Activated CD8-positive, alpha-beta memory T cell treated with anti-CD3 and anti-CD28 coated beads, Interleukin-2, amount 10 ng/mL, durations not matched to agents 7 days and 5 days (primary cell): ENCODE measurements at regions of chr4 and their contacts with region 1.

Region 1: GRCh38 chr4:25986807-25987206 is 72.8 kb downstream of the SMIM20 start:
- DNase-seq: no peak
- ATAC-seq: no peak
- H3K4me3 Mint-ChIP-seq: no peak overlapping the region
- H3K27ac Mint-ChIP-seq: no peak overlapping the region
- H3K4me1 Mint-ChIP-seq: peaks cover 9% of the 10 kb centered on the region
- H3K27me3 Mint-ChIP-seq: peaks cover 2% of the 10 kb centered on the region

Region 2: DNA sequence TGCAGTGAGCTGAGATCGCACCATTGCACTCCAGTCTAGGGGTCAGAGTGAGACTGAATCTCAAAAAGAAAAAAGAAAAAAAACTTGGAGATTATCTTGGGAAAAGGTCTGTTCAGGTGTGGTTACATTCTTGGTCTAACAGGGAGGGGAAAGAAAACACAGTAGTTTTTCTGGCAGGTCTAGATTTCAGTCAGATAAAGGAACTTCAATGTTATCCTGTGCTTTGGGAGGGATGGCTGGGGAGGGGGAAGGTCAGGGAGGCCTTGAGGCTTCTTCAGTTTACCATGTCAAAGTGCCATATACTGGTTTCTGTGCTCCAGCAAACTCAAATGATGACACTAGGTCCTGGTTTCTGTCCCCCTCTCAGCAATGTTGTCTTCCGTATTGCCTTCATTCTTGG is 380.1 kb before region 1 on chr4:
- CTCF ChIA-PET with region 1: no interaction called
- DNase-seq: no peak
- ATAC-seq: no peak
- H3K4me3 Mint-ChIP-seq: no peak overlapping the region
- H3K27ac Mint-ChIP-seq: no peak overlapping the region
- H3K4me1 Mint-ChIP-seq: no peaks in the 10 kb centered on the region
- H3K27me3 Mint-ChIP-seq: no peaks in the 10 kb centered on the region

Region 3: DNA sequence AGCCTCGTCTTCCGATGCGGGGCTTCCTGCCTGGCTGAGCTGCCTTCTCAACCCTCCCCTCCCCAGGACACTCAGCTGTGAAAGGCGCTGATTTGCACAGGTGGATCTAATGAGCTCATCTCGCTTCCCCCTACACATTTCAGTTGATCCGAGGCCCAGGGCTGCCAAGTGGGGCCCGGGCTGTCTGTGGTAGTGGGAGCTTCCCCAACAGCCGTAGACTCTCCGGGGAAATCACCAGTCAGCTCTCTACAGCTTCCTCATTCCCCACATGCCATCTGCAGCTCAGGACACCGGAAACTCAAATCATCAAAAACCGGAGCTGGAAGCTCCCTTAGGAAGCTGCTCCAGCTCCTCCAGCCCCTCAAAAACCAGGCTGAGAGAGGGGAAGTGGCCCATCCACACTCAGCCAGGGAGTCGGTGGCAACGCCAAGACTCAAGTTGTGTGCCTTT is 16.6 kb before region 1 on chr4:
- CTCF ChIA-PET with region 1: interaction called, 15 read pairs
- DNase-seq: no peak
- ATAC-seq: no peak
- H3K4me3 Mint-ChIP-seq: no peak overlapping the region
- H3K27ac Mint-ChIP-seq: no peak overlapping the region
- H3K4me1 Mint-ChIP-seq: peaks cover 2% of the 10 kb centered on the region
- H3K27me3 Mint-ChIP-seq: peaks cover 5% of the 10 kb centered on the region

Region 4: DNA sequence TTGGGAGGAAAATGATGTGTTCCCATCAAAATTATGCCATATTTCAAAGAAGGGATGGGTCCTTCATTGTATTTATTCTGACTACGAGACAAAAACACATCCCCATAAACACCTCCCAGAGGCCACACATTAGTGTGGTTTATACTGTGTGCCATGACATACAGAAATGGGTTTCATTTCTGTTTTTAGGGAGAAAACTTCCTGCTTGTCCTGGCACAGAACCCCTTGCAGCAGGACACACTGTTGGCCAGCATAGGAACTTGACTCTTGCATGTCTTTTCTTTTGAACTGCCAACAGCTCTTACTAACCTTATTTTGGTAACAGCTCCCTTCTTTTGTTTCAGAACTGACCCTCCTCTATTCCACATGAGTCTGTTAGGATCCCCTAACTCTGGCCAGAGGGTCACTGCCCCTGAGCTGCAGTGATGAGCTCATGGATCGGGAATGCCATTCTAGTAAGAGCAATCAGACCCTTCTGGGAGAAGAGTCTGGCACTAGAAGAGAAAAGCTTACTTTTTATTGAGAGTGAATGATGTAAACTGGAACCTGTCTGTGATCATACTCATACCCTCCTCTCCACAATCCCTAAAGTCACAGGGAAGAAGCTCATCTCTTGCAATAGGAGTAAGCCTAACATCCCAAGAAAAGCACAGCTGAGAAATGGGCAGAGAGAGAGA is 13.6 kb after region 1 on chr4:
- CTCF ChIA-PET with region 1: interaction called, 21 read pairs
- DNase-seq: no peak
- ATAC-seq: no peak
- H3K4me3 Mint-ChIP-seq: no peak overlapping the region
- H3K27ac Mint-ChIP-seq: no peak overlapping the region
- H3K4me1 Mint-ChIP-seq: no peaks in the 10 kb centered on the region
- H3K27me3 Mint-ChIP-seq: peaks cover 4% of the 10 kb centered on the region

Region 5: GRCh38 chr4:26005764-26006163 is 19.0 kb after region 1 on chr4:
- CTCF ChIA-PET with region 1: interaction called, 21 read pairs
- DNase-seq: no peak
- ATAC-seq: no peak
- H3K4me3 Mint-ChIP-seq: no peak overlapping the region
- H3K27ac Mint-ChIP-seq: no peak overlapping the region
- H3K4me1 Mint-ChIP-seq: peaks cover 7% of the 10 kb centered on the region
- H3K27me3 Mint-ChIP-seq: peaks cover 21% of the 10 kb centered on the region

Region 6: DNA sequence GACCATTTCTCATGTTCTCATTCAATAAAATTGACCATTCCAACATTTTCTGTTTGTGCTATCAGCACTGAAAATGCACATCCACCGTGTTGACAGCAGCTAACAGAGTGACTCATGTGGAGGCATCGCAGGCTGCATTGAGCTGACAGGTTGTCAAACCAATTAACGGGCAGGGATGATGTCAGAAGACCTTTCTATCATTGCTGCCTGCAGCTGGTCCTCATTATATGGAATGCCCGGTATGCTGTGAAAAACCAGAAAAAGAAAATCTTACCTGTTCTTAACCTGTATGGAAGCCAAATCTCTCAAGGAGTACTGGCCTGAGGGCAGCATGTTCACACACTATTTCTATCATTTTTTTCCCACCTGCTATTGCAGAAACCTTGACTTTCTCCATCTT is 129.3 kb after region 1 on chr4:
- CTCF ChIA-PET with region 1: no interaction called
- DNase-seq: no peak
- ATAC-seq: no peak
- H3K4me3 Mint-ChIP-seq: no peak overlapping the region
- H3K27ac Mint-ChIP-seq: no peak overlapping the region
- H3K4me1 Mint-ChIP-seq: no peaks in the 10 kb centered on the region
- H3K27me3 Mint-ChIP-seq: peaks cover 4% of the 10 kb centered on the region

Region 7: DNA sequence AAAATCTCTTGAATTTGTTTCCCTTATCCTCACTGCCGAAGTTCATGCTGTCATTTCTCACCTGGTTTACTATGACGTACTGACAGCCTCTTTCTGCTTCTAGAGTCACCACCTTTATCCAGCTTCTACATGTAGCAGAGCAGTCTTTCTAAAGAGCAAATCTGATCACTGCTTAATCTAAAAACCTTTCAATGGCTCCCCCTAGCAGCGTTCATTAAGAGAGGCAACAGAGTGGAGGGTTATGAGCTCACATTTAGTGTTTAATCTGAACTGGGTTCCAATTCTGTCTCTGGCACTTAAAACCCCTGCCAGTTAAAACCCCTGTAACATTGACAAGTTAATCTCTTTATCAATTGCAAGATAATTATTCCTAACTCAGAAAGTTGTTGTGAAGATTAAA is 338.4 kb after region 1 on chr4:
- CTCF ChIA-PET with region 1: interaction called, 21 read pairs
- DNase-seq: peak; percentile 53
- ATAC-seq: peak; percentile 32
- H3K4me3 Mint-ChIP-seq: peak overlapping the region; percentile 20
- H3K27ac Mint-ChIP-seq: peak overlapping the region; percentile 53
- H3K4me1 Mint-ChIP-seq: peaks cover 48% of the 10 kb centered on the region
- H3K27me3 Mint-ChIP-seq: no peaks in the 10 kb centered on the region

Region 8: GRCh38 chr4:26410385-26411293 is 423.8 kb after region 1 on chr4:
- CTCF ChIA-PET with region 1: interaction called, 13 read pairs
- DNase-seq: no peak
- ATAC-seq: peak; percentile 82
- H3K4me3 Mint-ChIP-seq: no peak overlapping the region
- H3K27ac Mint-ChIP-seq: no peak overlapping the region
- H3K4me1 Mint-ChIP-seq: peaks cover 8% of the 10 kb centered on the region
- H3K27me3 Mint-ChIP-seq: no peaks in the 10 kb centered on the region